Activated CD4-positive, alpha-beta memory T cell treated with anti-CD3 and anti-CD28 coated beads for 36 hours (primary cell): ENCODE measurements at regions of chr17 and their contacts with region 1.

Region 1: DNA sequence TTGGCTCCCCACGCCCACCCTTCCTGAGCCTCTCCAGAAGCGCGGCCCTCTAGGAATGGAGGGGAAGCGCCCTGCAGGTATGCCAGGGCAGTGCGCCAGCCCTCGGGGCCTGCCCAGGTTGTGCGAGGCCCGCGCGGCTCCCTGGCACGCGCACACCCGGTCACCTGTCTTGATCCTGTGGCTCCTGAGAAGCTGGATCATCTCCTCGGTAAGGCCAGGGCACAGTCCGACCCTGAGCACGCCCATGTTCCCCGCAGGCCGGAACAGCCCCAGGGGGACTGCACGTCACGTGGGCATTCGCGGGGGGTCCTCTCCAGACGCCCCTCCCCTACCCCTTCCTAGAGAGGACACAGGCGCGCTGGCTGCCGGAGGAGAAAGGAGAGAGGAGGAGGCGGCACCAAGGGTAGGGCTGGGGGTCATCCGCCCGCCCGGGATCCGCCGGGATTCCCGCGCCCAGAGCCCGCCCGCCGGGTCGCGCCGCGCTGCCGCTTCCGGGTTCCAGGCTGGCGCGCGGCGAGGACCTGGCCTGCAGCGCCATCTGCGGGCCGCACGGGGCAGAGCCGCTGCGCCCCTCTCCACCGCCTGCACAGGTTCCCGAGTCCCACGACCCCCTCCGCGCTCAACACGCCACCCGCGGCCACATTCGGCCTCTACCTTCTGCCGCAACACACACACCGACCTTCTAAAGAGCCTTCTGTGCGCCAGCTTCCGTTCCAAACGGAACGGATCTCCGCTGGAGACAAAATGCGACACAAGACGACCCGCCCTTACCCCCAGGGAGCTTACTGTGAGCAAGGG is at the start of gene RAD51D:
- DNase-seq: peak; percentile 85
- H3K4me3 Mint-ChIP-seq: peak within 1 kb of the TSS; percentile 86
- H3K27ac Mint-ChIP-seq: peak within 1 kb of the TSS; percentile 84
- H3K4me1 Mint-ChIP-seq: peaks cover 40% of the 10 kb centered on the region
- H3K27me3 Mint-ChIP-seq: no peaks in the 10 kb centered on the region
- total RNA-seq, gene RAD51D: 29.7 to 36.7 TPM

Region 2: DNA sequence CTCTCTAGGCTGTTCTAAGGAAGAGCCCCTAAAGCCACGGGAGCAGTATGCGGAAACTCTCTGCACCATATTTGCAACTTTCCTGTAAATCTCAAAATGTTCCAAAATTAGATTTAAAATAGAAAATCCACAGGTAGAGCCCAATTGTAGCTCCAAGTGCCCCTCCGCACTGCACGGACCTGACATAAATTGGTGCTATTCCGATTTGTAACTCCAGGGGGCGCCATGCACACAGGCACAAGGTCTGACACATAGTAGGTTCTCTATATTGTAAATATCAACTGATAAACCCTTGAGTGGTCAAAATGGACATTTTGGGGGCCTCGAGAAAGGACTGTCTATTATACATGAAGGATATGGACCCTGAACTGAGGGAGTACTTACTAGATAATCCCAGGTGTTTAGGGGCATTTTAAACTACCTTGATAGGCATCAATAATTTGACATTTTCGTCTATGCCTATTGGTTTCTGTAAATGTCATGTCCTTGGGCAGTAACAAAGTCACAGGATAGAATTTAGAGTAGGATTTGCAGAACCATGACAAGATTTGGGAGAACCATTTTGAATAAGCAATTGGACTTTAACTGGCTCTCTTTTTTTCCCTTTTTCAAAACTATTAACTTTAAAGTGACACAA is 576.7 kb before region 1 on chr17:
- CTCF ChIA-PET with region 1: interaction called, 32 read pairs
- POLR2A ChIA-PET with region 1: no interaction called
- intact Hi-C with region 1: loop called (anchors 1 kb)
- DNase-seq: peak; percentile 52
- H3K4me3 Mint-ChIP-seq: no peak overlapping the region
- H3K27ac Mint-ChIP-seq: no peak overlapping the region
- H3K4me1 Mint-ChIP-seq: no peaks in the 10 kb centered on the region
- H3K27me3 Mint-ChIP-seq: peaks cover 18% of the 10 kb centered on the region

Region 3: GRCh38 chr17:34990921-34991365 is 128.6 kb before region 1 on chr17:
- CTCF ChIA-PET with region 1: interaction called, 159 read pairs
- POLR2A ChIA-PET with region 1: no interaction called
- intact Hi-C with region 1: no loop called
- DNase-seq: no peak
- H3K4me3 Mint-ChIP-seq: no peak overlapping the region
- H3K27ac Mint-ChIP-seq: no peak overlapping the region
- H3K4me1 Mint-ChIP-seq: peaks cover 2% of the 10 kb centered on the region
- H3K27me3 Mint-ChIP-seq: no peaks in the 10 kb centered on the region

Region 4: GRCh38 chr17:35022536-35023063 is 97.0 kb before region 1 on chr17:
- CTCF ChIA-PET with region 1: interaction called, 30 read pairs
- POLR2A ChIA-PET with region 1: no interaction called
- intact Hi-C with region 1: no loop called
- DNase-seq: peak; percentile 90
- H3K4me3 Mint-ChIP-seq: peak overlapping the region; percentile 81
- H3K27ac Mint-ChIP-seq: peak overlapping the region; percentile 100
- H3K4me1 Mint-ChIP-seq: peaks cover 46% of the 10 kb centered on the region
- H3K27me3 Mint-ChIP-seq: no peaks in the 10 kb centered on the region